ENCODE measurements at regions of chr19 and their contacts with region 1.

Region 1: DNA sequence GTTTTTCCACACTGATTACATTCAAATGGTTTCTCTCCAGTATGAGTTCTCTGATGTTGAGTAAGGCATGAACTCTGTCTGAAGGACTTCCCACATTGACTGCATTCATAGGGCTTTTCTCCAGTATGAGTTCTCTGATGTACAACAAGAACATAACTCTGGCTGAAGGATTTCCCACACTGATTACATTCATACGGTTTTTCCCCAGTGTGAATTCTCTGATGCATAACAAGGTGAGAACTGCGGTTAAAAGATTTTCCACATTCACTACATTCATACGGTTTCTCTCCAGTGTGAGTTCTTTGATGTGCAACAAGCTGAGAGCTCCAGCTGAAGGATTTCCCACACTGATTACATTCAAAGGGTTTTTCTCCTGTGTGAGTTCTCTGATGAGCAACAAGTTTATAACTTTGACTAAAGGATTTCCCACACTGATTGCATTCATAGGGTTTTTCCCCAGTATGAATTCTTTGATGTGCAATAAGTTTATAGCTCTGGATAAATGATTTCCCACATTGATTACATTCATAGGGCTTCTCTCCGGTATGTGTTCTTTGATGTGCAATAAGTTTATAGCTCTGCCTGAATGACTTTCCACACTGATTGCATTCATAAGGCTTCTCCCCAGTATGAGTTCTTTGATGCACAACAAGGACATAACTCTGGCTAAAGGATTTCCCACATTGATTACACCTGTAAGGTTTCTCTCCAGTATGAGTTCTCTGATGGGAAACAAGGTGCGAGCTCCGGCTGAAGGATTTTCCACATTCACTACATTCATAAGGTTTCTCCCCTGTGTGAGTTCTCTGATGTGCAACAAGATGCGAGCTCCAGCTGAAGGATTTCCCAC is 23.5 kb downstream of the ZNF180 start:
- DNase-seq: no peak
- ATAC-seq: no peak
- H3K4me3 ChIP-seq: no peak overlapping the region
- H3K27ac ChIP-seq: no peak overlapping the region
- H3K4me1 ChIP-seq: peaks cover 2% of the 10 kb centered on the region; the same call in 1 of the 2 replicates
- H3K27me3 ChIP-seq: no peaks in the 10 kb centered on the region
- CTCF ChIP-seq: no peak

Region 2: GRCh38 chr19:44212250-44212865 is 264.4 kb before region 1 on chr19 and contains the start of gene ZNF227:
- CTCF ChIA-PET with region 1: no interaction called
- POLR2A ChIA-PET with region 1: interaction called, 12 read pairs
- in situ Hi-C with region 1: no loop called
- intact Hi-C with region 1: no loop called
- DNase-seq: peak; percentile 65
- ATAC-seq: peak; percentile 97
- H3K4me3 ChIP-seq: peak within 1 kb of the TSS; percentile 84 to 92
- H3K27ac ChIP-seq: peak within 1 kb of the TSS; percentile 87
- H3K4me1 ChIP-seq: 0 out of 2 replicates have a peak, but pooled peaks cover 3% of the 10 kb centered on the region
- H3K27me3 ChIP-seq: no peaks in the 10 kb centered on the region
- CTCF ChIP-seq: no peak
- total RNA-seq, gene ZNF227: 15.4 TPM

Region 3: GRCh38 chr19:44260363-44261070 is 216.3 kb before region 1 on chr19:
- CTCF ChIA-PET with region 1: no interaction called
- POLR2A ChIA-PET with region 1: no interaction called
- in situ Hi-C with region 1: no loop called
- intact Hi-C with region 1: no loop called
- DNase-seq: no peak
- ATAC-seq: peak; percentile 15; the same call in 1 of the 2 replicates
- H3K4me3 ChIP-seq: peak overlapping the region; percentile 65 to 77
- H3K27ac ChIP-seq: peak overlapping the region; percentile 77
- H3K4me1 ChIP-seq: peaks cover 6% of the 10 kb centered on the region; the same call in 1 of the 2 replicates
- H3K27me3 ChIP-seq: no peaks in the 10 kb centered on the region
- CTCF ChIP-seq: no peak

Region 4: DNA sequence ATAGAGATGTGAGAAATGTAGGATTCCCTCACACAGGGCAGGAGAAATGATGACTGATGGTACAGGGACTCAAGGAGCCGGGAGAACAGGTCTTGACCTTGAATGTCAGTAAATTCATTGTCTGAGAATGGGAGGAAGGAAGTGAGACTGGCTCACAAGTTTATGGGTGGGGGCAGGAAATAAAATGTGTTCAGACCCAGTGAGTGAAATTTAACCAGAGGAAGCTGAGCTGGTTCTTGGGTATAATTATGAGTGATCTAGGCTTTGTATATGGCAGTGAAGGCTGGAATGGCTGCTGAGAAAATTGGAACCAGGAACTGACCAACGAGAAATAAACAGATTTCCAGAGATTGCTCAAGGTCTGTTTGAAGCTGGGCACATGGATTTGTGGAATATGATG is 130.3 kb after region 1 on chr19:
- CTCF ChIA-PET with region 1: no interaction called
- POLR2A ChIA-PET with region 1: no interaction called
- in situ Hi-C with region 1: no loop called
- intact Hi-C with region 1: no loop called
- DNase-seq: no peak
- ATAC-seq: no peak
- H3K4me3 ChIP-seq: no peak overlapping the region
- H3K27ac ChIP-seq: no peak overlapping the region
- H3K4me1 ChIP-seq: no peaks in the 10 kb centered on the region
- H3K27me3 ChIP-seq: no peaks in the 10 kb centered on the region
- CTCF ChIP-seq: no peak

Measured in Panc1 (cell line).